Pancreas (tissue), 10 donors: ENCODE measurements at regions of chr11 and their contacts with region 1.

Region 1: GRCh38 chr11:132131047-132131446 is 760.6 kb downstream of the NTM start:
- DNase-seq: no peak
- ATAC-seq: no peak
- H3K4me3 ChIP-seq: no peak overlapping the region
- H3K27ac ChIP-seq: no peak overlapping the region
- H3K4me1 ChIP-seq: peaks cover 0 to 3% (median 0%) of the 10 kb centered on the region in 3 donors
- H3K27me3 ChIP-seq: no peaks in the 10 kb centered on the region
- CTCF ChIP-seq: no peak

Region 2: GRCh38 chr11:131290185-131290584 is 840.9 kb before region 1 on chr11:
- intact Hi-C with region 1: no loop called
- DNase-seq: no peak
- ATAC-seq: no peak
- H3K4me3 ChIP-seq: no peak overlapping the region
- H3K27ac ChIP-seq: no peak overlapping the region
- H3K4me1 ChIP-seq: no peaks in the 10 kb centered on the region
- H3K27me3 ChIP-seq: peaks cover 0 to 3% (median 0%) of the 10 kb centered on the region in 4 donors
- CTCF ChIP-seq: no peak

Region 3: DNA sequence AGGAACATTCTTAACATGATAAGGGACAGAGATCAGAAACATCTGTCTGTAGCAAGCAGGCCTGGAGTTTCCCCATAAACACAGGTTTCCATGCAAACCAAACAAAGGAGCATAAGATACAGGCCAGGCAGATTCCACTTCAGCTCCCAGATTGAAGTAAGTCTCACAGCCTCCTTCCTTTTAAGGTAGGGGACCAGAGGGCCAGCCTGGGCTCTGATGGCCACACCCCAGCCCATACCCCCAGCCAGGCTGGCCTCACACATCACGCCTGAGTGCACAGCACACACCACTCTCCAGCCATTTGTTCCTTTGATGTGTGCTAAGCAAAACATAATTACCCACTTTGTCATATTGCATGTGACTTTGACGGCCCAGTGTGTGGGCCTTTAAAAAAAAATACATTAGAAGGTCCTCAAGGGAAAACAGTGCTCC is 241.9 kb before region 1 on chr11:
- intact Hi-C with region 1: loop called in 1 of 3 experiments (anchors 10 kb)
- DNase-seq: no peak
- ATAC-seq: peak in 3 of 4 donors; percentile 26 to 64 (median 47)
- H3K4me3 ChIP-seq: no peak overlapping the region
- H3K27ac ChIP-seq: no peak overlapping the region
- H3K4me1 ChIP-seq: no peaks in the 10 kb centered on the region
- H3K27me3 ChIP-seq: peaks cover 0 to 6% (median 0%) of the 10 kb centered on the region in 4 donors
- CTCF ChIP-seq: no peak

Region 4: DNA sequence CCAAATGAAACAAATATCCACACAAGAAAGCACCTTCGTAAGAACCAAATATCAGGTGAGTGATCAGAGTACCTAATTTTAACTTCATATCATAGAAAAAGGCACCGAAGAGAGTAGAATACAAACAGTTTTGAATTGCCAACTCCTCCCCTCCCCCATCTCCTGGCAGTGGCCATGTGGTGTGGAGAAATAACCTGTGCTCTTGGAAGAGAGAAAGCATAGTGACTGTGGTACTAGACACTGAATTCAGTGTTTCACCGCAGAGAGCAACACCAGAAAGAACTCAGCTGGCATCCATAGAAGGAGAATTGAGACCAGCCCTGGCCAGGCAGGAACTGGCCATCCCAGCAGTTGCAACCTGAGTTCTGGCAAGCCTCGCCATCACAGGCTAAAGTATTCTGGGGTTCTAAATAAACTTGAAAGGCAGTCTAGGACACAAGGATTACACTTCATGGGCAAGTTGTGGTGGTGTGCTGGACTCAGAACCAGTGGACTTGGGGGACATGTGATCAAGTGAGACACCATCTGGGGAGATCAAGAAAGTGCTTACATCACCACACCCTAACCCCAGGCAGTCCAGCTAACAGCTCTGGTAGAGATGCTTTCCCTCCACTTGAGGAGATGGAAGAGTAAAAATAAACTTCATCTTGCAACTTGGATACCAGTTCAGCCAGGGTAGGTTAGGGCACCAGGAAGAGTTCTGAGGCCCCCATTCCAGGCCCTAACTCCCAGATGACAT is 242.5 kb after region 1 on chr11:
- intact Hi-C with region 1: no loop called
- DNase-seq: no peak
- ATAC-seq: no peak
- H3K4me3 ChIP-seq: no peak overlapping the region
- H3K27ac ChIP-seq: no peak overlapping the region
- H3K4me1 ChIP-seq: no peaks in the 10 kb centered on the region
- H3K27me3 ChIP-seq: peaks cover 0 to 3% (median 0%) of the 10 kb centered on the region in 4 donors
- CTCF ChIP-seq: no peak